ENCODE measurements at regions of chr19 and their contacts with region 1.

Region 1: GRCh38 chr19:11987405-11988281 is 22.8 kb downstream of the ZNF763 start:
- DNase-seq: peak; percentile 96
- ATAC-seq: peak; percentile 98 to 100 (median 100)
- H3K4me3 ChIP-seq: peak overlapping the region; percentile 72 to 98 (median 84)
- H3K27ac ChIP-seq: peak overlapping the region; percentile 12 to 90 (median 87)
- H3K4me1 ChIP-seq: peaks cover 0 to 12% (median 0%) of the 10 kb centered on the region in 9 donors
- H3K27me3 ChIP-seq: no peaks in the 10 kb centered on the region
- CTCF ChIP-seq: peak in 1 of 9 donors; percentile 8

Region 2: GRCh38 chr19:11558881-11559828 is 428.5 kb before region 1 on chr19 and contains the start of gene ELOF1:
- intact Hi-C with region 1: no loop called
- DNase-seq: peak; percentile 97 to 98
- ATAC-seq: peak; percentile 97 to 99 (median 99)
- H3K4me3 ChIP-seq: peak within 1 kb of the TSS; percentile 61 to 96 (median 82)
- H3K27ac ChIP-seq: peak within 1 kb of the TSS; percentile 15 to 87 (median 74)
- H3K4me1 ChIP-seq: peaks cover 9 to 44% (median 36%) of the 10 kb centered on the region in 9 donors
- H3K27me3 ChIP-seq: no peaks in the 10 kb centered on the region
- CTCF ChIP-seq: peak in 3 of 9 donors; percentile 24 to 45 (median 37)
- total RNA-seq, gene ELOF1: 24.9 to 37.5 (median 30.9) TPM

Region 3: GRCh38 chr19:11881151-11881800 is 106.4 kb before region 1 on chr19:
- intact Hi-C with region 1: loop called in 8 of 10 experiments (anchors 2 to 5 kb)
- DNase-seq: peak; percentile 11 to 53
- ATAC-seq: peak; percentile 64 to 86 (median 72)
- H3K4me3 ChIP-seq: no peak overlapping the region
- H3K27ac ChIP-seq: no peak overlapping the region
- H3K4me1 ChIP-seq: peaks cover 0 to 5% (median 0%) of the 10 kb centered on the region in 9 donors
- H3K27me3 ChIP-seq: no peaks in the 10 kb centered on the region
- CTCF ChIP-seq: peak; percentile 41 to 80 (median 72)

Region 4: DNA sequence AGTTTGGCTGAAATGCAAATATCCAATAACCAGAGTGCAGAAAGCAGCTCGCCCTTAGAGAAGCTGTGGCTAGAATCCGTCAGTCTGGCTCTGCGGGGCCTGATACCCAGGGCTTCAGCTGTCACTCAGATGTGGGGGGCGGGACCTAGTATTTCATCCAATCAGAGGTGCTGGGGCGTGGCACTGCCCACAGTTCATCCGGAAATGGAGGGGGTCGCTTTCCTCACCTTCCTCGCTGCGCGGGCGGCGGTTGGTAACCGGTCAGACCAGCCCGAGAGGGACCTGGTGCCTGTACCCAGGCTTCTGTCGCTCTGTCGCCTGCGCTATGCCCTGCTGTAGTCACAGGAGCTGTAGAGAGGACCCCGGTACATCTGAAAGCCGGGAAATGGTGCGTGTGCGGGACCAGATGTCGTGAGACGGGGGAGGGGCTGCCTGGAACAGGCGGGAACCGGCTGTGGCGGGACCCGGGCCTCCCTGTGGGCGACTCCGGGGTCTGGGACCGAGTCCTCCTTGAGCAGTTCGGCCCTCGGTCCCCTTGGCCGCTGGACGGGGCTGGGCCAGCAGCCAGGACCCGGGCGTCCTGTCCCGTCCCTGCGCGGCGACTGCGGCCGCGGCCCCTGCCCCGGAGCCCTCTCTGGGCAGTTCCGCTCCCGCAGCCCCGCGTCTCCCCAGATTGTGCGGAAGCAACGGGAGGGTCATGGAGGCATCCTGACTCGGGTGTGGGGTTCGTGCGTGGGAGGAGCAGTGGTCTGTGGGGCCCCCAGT is 62.6 kb before region 1 on chr19 and contains the start of gene ZNF700:
- intact Hi-C with region 1: loop called in 9 of 10 experiments (anchors 1 to 5 kb)
- DNase-seq: peak; percentile 91 to 97
- ATAC-seq: peak; percentile 97 to 99 (median 98)
- H3K4me3 ChIP-seq: peak within 1 kb of the TSS; percentile 68 to 99 (median 91)
- H3K27ac ChIP-seq: peak within 1 kb of the TSS; percentile 84 to 98 (median 93)
- H3K4me1 ChIP-seq: peaks cover 0 to 33% (median 19%) of the 10 kb centered on the region in 9 donors
- H3K27me3 ChIP-seq: no peaks in the 10 kb centered on the region
- CTCF ChIP-seq: no peak
- total RNA-seq, gene ZNF700: 2.8 to 5.0 (median 4.4) TPM

Region 5: DNA sequence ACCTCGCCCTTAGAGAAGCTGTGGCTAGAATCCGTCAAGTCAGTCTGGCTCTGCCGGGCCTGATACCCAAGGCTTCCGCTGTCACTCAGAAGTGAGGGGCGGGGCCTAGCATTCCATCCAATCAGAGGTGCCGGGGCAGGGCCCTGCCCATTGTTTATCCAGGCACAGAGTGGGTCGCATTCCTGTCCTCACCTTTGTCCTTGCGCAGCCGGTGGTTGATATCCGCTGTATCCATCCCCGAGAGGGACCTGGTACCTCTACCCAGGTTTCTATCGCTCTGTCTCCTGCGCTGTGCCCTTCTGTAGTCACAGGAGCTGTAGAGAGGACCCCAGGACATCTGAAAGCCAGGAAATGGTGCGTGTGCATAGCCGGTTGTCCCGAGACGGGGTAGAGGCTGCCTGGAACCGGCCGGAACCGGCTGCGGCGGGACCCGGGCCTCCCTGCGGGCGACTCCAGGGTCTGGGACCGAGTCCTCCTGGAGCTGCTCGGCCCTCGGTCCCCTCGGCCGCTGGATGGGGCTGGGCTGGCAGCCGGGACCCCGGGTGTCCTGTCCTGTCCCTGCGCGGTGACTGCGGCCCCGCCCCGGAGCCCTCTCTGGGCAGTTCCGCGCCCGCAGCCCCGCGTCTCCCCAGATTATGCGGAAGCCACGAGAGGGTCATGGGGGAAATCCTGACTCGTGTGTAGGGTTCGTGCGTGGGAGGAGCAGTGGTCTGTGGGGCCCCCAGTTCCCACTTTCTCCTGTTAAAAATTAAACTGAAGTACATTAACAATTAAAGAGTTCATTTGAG is 22.6 kb before region 1 on chr19 and contains the start of gene ZNF763:
- intact Hi-C with region 1: loop called in 7 of 10 experiments (anchors 1 to 2 kb)
- DNase-seq: peak; percentile 92 to 95
- ATAC-seq: peak; percentile 96 to 99 (median 99)
- H3K4me3 ChIP-seq: peak within 1 kb of the TSS; percentile 55 to 94 (median 87)
- H3K27ac ChIP-seq: peak within 1 kb of the TSS; percentile 88 to 98 (median 95)
- H3K4me1 ChIP-seq: peaks cover 5 to 25% (median 17%) of the 10 kb centered on the region in 9 donors
- H3K27me3 ChIP-seq: no peaks in the 10 kb centered on the region
- CTCF ChIP-seq: no peak
- total RNA-seq, gene ZNF763: 1.7 to 7.1 (median 4.8) TPM

Region 6: DNA sequence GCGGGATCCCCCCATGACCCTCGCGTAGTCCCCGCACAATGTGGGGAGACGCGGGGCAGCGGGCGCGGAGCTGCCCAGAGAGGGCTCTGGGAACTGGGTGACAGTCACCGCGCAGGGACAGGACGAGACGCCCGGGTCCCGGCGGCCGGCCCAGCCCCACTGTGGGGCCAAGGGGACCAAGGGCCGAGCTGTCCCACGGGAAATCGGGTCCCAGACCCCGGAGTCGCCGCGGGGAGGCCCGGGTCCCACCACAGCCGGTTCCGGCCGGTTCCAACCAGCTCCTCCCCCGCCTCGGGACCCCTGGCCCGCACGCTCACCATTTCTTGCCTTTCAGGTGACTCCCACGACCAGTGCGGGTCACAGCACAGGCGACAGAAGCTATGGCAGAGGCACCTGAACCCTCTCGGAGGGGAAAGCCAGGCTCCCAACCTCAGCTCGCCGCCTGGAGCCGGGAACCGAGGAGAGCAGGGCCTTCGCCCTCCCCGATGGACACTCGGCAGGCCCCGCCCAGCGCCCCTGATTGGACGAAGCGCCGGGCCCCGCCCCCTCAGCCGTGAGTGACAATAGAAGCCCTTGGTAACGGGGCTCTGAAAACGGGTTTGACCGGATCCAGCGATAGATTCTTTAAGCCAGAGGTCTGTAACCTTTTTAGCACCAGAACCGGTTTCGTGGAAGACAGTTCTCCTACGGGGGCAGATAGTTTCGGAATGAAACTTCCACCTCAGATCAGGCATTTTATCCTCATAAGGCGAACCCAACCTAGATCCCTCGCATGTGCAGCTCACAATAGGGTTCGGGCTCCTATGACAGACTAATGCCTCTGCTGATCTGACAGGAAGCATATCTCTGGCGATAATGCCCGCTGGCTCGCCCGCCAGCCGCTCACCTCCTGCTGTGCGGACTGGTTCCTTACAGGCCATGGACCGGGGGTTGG is 47.8 kb after region 1 on chr19 and contains the start of gene ZNF433:
- intact Hi-C with region 1: loop called in 1 of 10 experiments (anchors 2 kb)
- DNase-seq: peak; percentile 95 to 96
- ATAC-seq: peak; percentile 99 to 100 (median 100)
- H3K4me3 ChIP-seq: peak within 1 kb of the TSS; percentile 74 to 97 (median 89)
- H3K27ac ChIP-seq: peak within 1 kb of the TSS; percentile 55 to 92 (median 88)
- H3K4me1 ChIP-seq: peaks cover 0 to 20% (median 8%) of the 10 kb centered on the region in 9 donors
- H3K27me3 ChIP-seq: no peaks in the 10 kb centered on the region
- CTCF ChIP-seq: peak in 3 of 9 donors; percentile 5 to 30 (median 21)
- total RNA-seq, gene ZNF433: 2.9 to 6.6 (median 4.1) TPM